Common myeloid progenitor, CD34-positive (primary cell): ENCODE measurements at regions of chr1 and their contacts with region 1.

Region 1: GRCh38 chr1:27300341-27301051 is 21.5 kb upstream of the TMEM222 start:
- DNase-seq: peak; percentile 92 to 96 (median 93)
- H3K4me3 ChIP-seq: no peak overlapping the region
- H3K27ac ChIP-seq: no peak overlapping the region
- H3K4me1 ChIP-seq: peaks cover 0 to 29% (median 21%) of the 10 kb centered on the region in 4 experiments
- H3K27me3 ChIP-seq: no peaks in the 10 kb centered on the region

Region 2: DNA sequence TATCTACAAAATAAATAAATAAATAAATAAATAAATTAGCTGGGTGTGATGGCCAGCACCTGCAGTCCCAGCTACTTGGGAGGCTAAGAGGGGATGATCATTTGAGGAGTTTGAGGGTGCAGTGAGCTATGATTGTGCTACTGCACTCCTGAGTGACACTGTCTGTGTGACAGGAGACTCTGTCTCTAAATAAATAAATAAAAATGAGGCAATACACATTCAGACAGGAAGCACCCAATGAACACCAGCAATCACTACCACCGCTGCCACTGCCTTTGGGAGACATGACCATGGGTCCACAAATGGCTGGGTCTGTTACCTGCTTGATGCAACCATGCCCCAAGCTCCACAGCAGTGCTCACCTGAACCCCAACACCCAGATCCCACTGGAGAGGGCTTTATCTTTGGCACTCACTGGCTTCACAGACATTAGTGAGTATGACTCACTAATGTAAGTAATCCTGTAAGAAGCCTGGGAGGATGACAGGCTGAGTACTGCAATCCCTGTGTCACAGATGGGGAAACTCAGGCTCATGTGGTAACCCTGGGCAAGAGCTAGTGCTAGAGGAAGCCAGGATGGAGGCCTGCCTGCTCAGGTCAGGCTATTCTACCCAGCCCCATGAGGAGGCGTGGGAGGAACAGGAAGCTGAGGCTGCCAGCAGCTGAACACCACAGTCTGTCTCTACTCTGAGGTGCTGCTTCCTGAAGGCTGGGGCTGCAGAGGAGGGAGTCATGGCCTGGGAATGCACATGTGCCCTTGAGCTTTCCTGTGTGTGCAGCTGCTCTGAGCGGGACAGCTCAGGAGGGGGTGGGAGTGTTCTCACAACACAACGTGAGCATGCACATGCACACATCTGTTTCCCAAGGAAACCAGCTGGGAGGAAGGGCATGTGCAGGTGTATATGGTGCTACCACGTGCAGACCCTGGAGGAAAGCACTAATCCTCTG is 188.6 kb before region 1 on chr1:
- CTCF ChIA-PET with region 1: interaction called, 19 read pairs
- POLR2A ChIA-PET with region 1: no interaction called
- DNase-seq: peak; percentile 87 to 98 (median 96)
- H3K4me3 ChIP-seq: no peak overlapping the region
- H3K27ac ChIP-seq: no peak overlapping the region
- H3K4me1 ChIP-seq: peaks cover 9 to 65% (median 50%) of the 10 kb centered on the region in 4 experiments
- H3K27me3 ChIP-seq: no peaks in the 10 kb centered on the region

Region 3: DNA sequence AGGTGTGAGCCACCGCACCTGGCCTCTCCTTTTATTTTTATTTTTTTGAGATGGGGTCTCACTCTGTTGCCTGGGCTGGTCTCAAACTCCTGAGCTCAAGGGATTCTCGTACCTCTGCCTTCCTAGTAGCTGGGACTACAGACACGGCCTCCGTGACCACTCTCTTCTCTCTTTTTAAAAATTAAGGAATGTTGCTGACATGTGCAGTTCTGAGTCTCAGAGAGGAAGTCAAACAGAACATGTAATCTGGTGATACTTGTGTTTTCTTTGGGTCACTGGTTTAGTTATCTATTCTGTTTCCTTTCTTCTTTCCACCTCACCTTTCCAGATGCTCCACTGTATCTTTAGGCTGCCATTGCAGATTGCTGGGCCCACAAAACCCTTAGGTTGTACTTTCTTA is 63.4 kb before region 1 on chr1:
- CTCF ChIA-PET with region 1: no interaction called
- POLR2A ChIA-PET with region 1: no interaction called
- DNase-seq: no peak
- H3K4me3 ChIP-seq: no peak overlapping the region
- H3K27ac ChIP-seq: no peak overlapping the region
- H3K4me1 ChIP-seq: peaks cover 8 to 22% (median 20%) of the 10 kb centered on the region in 4 experiments
- H3K27me3 ChIP-seq: no peaks in the 10 kb centered on the region

Region 4: DNA sequence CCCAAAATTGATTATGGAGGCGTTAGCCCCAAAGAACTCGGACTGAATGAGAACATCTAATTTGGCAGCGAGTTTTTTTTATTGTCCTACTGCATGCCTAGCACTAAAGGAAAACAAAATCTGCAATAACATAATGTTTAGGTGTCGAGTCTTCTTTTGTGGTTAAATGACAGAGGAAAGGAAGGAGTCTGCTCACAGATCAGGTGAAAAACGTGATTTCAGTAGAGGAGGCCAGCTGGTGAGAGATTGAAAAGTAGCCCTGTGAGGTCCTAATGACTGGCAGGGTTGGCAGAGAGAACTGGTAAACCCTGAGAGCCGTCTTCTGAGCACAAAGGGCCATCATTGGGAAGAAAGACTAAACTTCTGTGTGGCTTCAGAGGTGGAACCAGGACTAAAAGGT is 41.9 kb before region 1 on chr1:
- CTCF ChIA-PET with region 1: no interaction called
- POLR2A ChIA-PET with region 1: no interaction called
- DNase-seq: no peak
- H3K4me3 ChIP-seq: no peak overlapping the region
- H3K27ac ChIP-seq: no peak overlapping the region
- H3K4me1 ChIP-seq: peaks cover 0 to 7% (median 0%) of the 10 kb centered on the region in 4 experiments
- H3K27me3 ChIP-seq: no peaks in the 10 kb centered on the region

Region 5: DNA sequence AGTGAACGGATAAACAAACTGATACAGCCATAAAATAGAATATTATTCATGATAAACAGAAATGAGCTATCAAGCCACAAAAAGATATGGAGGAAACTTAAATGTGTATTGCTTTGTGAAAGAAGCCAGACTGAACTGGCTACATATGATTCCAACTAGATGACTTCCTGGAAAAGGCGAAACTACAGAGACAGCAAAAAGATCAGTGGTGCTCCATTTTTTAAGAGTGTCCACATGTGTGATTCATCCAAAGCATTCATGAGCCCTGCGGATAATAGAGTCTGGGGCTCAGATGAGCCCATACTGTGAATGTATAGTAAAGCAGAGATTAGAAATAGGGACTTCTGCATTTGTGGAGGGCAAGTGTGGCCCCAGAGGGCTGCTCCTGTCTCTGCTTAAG is 13.7 kb after region 1 on chr1:
- CTCF ChIA-PET with region 1: interaction called, 13 read pairs
- POLR2A ChIA-PET with region 1: no interaction called
- DNase-seq: peak in 2 of 3 donors; percentile 30 to 33
- H3K4me3 ChIP-seq: no peak overlapping the region
- H3K27ac ChIP-seq: no peak overlapping the region
- H3K4me1 ChIP-seq: no peaks in the 10 kb centered on the region
- H3K27me3 ChIP-seq: peaks cover 0 to 3% (median 0%) of the 10 kb centered on the region in 5 experiments

Region 6: DNA sequence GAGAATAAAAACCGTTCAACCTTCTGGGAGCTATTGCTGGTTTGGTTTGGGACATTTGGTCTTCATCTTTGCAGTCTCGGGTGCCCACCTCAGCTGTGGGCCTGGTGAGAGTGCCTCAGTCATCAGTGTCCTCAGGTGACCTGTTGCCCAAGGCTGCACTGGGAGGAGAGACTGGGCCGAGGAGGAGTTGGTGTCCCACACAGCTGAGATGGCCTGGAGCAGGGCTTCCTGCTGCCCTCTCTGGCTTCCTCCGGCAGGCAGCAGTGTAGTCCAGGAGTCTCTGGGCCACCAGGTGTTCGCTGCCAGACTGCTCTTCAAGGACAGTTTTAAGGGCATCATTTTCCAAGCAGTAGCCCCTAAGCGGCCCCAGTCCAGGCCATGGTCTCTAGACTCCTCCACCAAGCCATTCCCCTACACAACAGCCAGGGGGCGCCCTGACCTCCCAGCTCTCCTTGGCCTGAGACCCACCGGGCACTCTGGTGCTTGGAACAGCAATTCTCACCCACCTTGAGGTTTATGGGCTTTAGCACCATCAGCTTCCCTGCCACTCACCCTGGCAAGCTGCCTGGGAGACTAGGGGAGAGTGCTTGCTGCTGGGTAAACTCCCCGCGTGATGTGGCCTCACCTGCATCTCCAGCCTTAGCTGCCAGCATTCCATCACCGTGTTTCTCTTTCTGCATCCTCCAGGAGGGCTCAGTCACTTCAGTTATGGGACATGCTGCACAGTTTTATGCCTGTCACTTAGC is 32.2 kb after region 1 on chr1:
- CTCF ChIA-PET with region 1: interaction called, 13 read pairs
- POLR2A ChIA-PET with region 1: no interaction called
- DNase-seq: peak in 2 of 3 donors; percentile 64
- H3K4me3 ChIP-seq: no peak overlapping the region
- H3K27ac ChIP-seq: no peak overlapping the region
- H3K4me1 ChIP-seq: no peaks in the 10 kb centered on the region
- H3K27me3 ChIP-seq: no peaks in the 10 kb centered on the region

Region 7: DNA sequence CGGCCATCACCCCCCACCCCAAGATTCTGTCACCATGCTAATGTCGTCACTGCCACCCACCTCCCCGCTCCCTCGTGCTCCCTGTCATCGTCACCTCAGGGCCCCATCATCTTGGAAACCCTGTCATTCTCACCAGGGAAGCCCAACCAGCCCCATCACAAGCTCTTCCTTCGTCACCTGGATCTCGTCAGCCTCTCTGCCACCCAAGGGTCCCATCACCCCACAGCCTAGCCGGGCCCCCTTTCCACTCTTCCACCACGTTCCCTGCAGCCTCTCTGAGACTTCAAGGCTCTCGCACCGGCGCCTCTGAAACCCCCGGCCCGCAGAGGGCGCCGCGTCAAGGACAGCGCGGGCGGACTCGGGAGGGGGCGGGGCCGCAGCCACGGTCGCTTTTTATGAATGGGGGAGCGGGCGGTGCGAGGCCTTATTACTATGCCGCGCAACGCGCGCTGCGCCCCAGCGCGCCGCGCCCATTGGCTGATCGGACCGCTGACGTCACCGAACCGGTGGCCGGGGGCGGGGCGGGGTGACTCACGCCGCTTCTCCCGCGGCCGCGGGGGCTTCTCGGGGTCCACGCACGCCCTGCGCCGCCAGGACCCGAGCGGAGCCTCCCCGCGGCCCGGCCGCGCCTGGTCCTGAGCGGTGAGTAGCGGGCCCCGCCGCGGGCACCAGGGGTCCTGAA is 91.7 kb after region 1 on chr1 and contains the start of gene GPR3:
- CTCF ChIA-PET with region 1: interaction called, 238 read pairs
- POLR2A ChIA-PET with region 1: interaction called, 3 read pairs
- DNase-seq: peak; percentile 93 to 96 (median 95)
- H3K4me3 ChIP-seq: peak within 1 kb of the TSS; percentile 19 to 78 (median 72)
- H3K27ac ChIP-seq: no peak within 1 kb of the TSS
- H3K4me1 ChIP-seq: peaks cover 2 to 24% (median 18%) of the 10 kb centered on the region in 4 experiments
- H3K27me3 ChIP-seq: no peaks in the 10 kb centered on the region